GM12878 (cell line): ENCODE measurements at regions of chr12 and their contacts with region 1.

Region 1: GRCh38 chr12:107912421-107913004 is 138.0 kb downstream of the ASCL4 start:
- DNase-seq: no peak
- ATAC-seq: peak; percentile 98
- H3K4me3 ChIP-seq: no peak overlapping the region; the same call in 1 of the 2 replicates
- H3K27ac ChIP-seq: no peak overlapping the region
- H3K4me1 ChIP-seq: no peaks in the 10 kb centered on the region
- H3K27me3 ChIP-seq: no peaks in the 10 kb centered on the region; a peak in 2 of 4 replicates
- CTCF ChIP-seq: peak; percentile 87 to 98 (median 89)
- EP300 ChIP-seq: no peak
- POLR2A ChIP-seq: no peak
- RAD21 ChIP-seq: 0 out of 2 replicates have a peak, but pooled peaks have one; percentile 18

Region 2: GRCh38 chr12:107679336-107679735 is 233.2 kb before region 1 on chr12:
- CTCF ChIA-PET with region 1: interaction called, 19 read pairs
- POLR2A ChIA-PET with region 1: no interaction called
- RAD21 ChIA-PET with region 1: interaction called, 3 read pairs
- SMC1A ChIA-PET with region 1: no interaction called
- in situ Hi-C with region 1: no loop called
- intact Hi-C with region 1: no loop called
- DNase-seq: no peak
- ATAC-seq: no peak
- H3K4me3 ChIP-seq: no peak overlapping the region
- H3K27ac ChIP-seq: no peak overlapping the region
- H3K4me1 ChIP-seq: no peaks in the 10 kb centered on the region
- H3K27me3 ChIP-seq: no peaks in the 10 kb centered on the region
- CTCF ChIP-seq: no peak
- EP300 ChIP-seq: no peak
- POLR2A ChIP-seq: no peak
- RAD21 ChIP-seq: no peak